ENCODE measurements at regions of chr18 and their contacts with region 1.

Region 1: GRCh38 chr18:21632393-21632792 is 20.3 kb downstream of the SNRPD1 start:
- DNase-seq: no peak
- ATAC-seq: no peak
- H3K4me3 ChIP-seq: no peak overlapping the region
- H3K4me3 Mint-ChIP-seq: no peak overlapping the region
- H3K27ac ChIP-seq: no peak overlapping the region
- H3K27ac Mint-ChIP-seq: peak overlapping the region in 2 of 9 donors; percentile 32 to 41
- H3K4me1 ChIP-seq: peaks cover 0 to 10% of the 10 kb centered on the region in 2 donors
- H3K4me1 Mint-ChIP-seq: peaks cover 10 to 25% (median 17%) of the 10 kb centered on the region in 7 donors
- H3K27me3 ChIP-seq: no peaks in the 10 kb centered on the region
- H3K27me3 Mint-ChIP-seq: no peaks in the 10 kb centered on the region

Region 2: GRCh38 chr18:21584391-21584790 is 48.0 kb before region 1 on chr18:
- CTCF ChIA-PET with region 1: no interaction called
- POLR2A ChIA-PET with region 1: no interaction called
- intact Hi-C with region 1: no loop called
- DNase-seq: no peak
- ATAC-seq: no peak
- H3K4me3 ChIP-seq: no peak overlapping the region
- H3K4me3 Mint-ChIP-seq: no peak overlapping the region
- H3K27ac ChIP-seq: no peak overlapping the region
- H3K27ac Mint-ChIP-seq: peak overlapping the region in 2 of 9 donors; percentile 26 to 30
- H3K4me1 ChIP-seq: no peaks in the 10 kb centered on the region
- H3K4me1 Mint-ChIP-seq: peaks cover 9 to 52% (median 32%) of the 10 kb centered on the region in 7 donors
- H3K27me3 ChIP-seq: no peaks in the 10 kb centered on the region
- H3K27me3 Mint-ChIP-seq: no peaks in the 10 kb centered on the region

Region 3: GRCh38 chr18:21851327-21851972 is 219.1 kb after region 1 on chr18:
- CTCF ChIA-PET with region 1: no interaction called
- POLR2A ChIA-PET with region 1: no interaction called
- intact Hi-C with region 1: loop called (anchors 2 to 10 kb)
- DNase-seq: peak in 4 of 9 donors; percentile 1 to 17 (median 4)
- ATAC-seq: no peak
- H3K4me3 ChIP-seq: no peak overlapping the region
- H3K4me3 Mint-ChIP-seq: no peak overlapping the region
- H3K27ac ChIP-seq: no peak overlapping the region
- H3K27ac Mint-ChIP-seq: peak overlapping the region in 1 of 9 donors; percentile 18
- H3K4me1 ChIP-seq: no peaks in the 10 kb centered on the region
- H3K4me1 Mint-ChIP-seq: peaks cover 0 to 11% (median 9%) of the 10 kb centered on the region in 7 donors
- H3K27me3 ChIP-seq: no peaks in the 10 kb centered on the region
- H3K27me3 Mint-ChIP-seq: no peaks in the 10 kb centered on the region

Region 4: GRCh38 chr18:23038712-23039111 is 1406.3 kb after region 1 on chr18:
- CTCF ChIA-PET with region 1: no interaction called
- POLR2A ChIA-PET with region 1: no interaction called
- intact Hi-C with region 1: no loop called
- DNase-seq: no peak
- ATAC-seq: no peak
- H3K4me3 ChIP-seq: no peak overlapping the region
- H3K4me3 Mint-ChIP-seq: no peak overlapping the region
- H3K27ac ChIP-seq: no peak overlapping the region
- H3K27ac Mint-ChIP-seq: peak overlapping the region in 1 of 9 donors; percentile 5
- H3K4me1 ChIP-seq: no peaks in the 10 kb centered on the region
- H3K4me1 Mint-ChIP-seq: peaks cover 0 to 14% (median 9%) of the 10 kb centered on the region in 7 donors
- H3K27me3 ChIP-seq: no peaks in the 10 kb centered on the region
- H3K27me3 Mint-ChIP-seq: peaks cover 0 to 6% (median 0%) of the 10 kb centered on the region in 5 donors

Measured in naive thymus-derived CD4-positive, alpha-beta T cell (primary cell).